Endothelial cell of umbilical vein (primary cell): ENCODE measurements at regions of chr2 and their contacts with region 1.

Region 1: GRCh38 chr2:158006961-158007719 is 94.5 kb upstream of the UPP2 start:
- DNase-seq: no peak
- H3K4me3 ChIP-seq: no peak overlapping the region
- H3K27ac ChIP-seq: no peak overlapping the region
- H3K4me1 ChIP-seq: peaks cover 10% of the 10 kb centered on the region
- H3K27me3 ChIP-seq: no peaks in the 10 kb centered on the region
- CTCF ChIP-seq: no peak
- POLR2A ChIP-seq: no peak

Region 2: GRCh38 chr2:157327621-157328500 is 679.3 kb before region 1 on chr2:
- CTCF ChIA-PET with region 1: interaction called, 3 read pairs
- POLR2A ChIA-PET with region 1: no interaction called
- dilution Hi-C with region 1: no loop called
- intact Hi-C with region 1: loop called (anchors 1 kb)
- DNase-seq: peak; percentile 65
- H3K4me3 ChIP-seq: no peak overlapping the region
- H3K27ac ChIP-seq: no peak overlapping the region
- H3K4me1 ChIP-seq: no peaks in the 10 kb centered on the region
- H3K27me3 ChIP-seq: peaks cover 0 to 4% of the 10 kb centered on the region in 2 experiments
- CTCF ChIP-seq: peak; percentile 89 to 94
- POLR2A ChIP-seq: no peak

Region 3: GRCh38 chr2:157497638-157498314 is 509.4 kb before region 1 on chr2:
- CTCF ChIA-PET with region 1: interaction called, 22 read pairs
- POLR2A ChIA-PET with region 1: no interaction called
- dilution Hi-C with region 1: no loop called
- intact Hi-C with region 1: loop called (anchors 1 kb)
- DNase-seq: peak; percentile 36
- H3K4me3 ChIP-seq: no peak overlapping the region
- H3K27ac ChIP-seq: no peak overlapping the region
- H3K4me1 ChIP-seq: no peaks in the 10 kb centered on the region
- H3K27me3 ChIP-seq: peaks cover 0 to 3% of the 10 kb centered on the region in 2 experiments
- CTCF ChIP-seq: peak; percentile 53 to 63
- POLR2A ChIP-seq: no peak

Region 4: DNA sequence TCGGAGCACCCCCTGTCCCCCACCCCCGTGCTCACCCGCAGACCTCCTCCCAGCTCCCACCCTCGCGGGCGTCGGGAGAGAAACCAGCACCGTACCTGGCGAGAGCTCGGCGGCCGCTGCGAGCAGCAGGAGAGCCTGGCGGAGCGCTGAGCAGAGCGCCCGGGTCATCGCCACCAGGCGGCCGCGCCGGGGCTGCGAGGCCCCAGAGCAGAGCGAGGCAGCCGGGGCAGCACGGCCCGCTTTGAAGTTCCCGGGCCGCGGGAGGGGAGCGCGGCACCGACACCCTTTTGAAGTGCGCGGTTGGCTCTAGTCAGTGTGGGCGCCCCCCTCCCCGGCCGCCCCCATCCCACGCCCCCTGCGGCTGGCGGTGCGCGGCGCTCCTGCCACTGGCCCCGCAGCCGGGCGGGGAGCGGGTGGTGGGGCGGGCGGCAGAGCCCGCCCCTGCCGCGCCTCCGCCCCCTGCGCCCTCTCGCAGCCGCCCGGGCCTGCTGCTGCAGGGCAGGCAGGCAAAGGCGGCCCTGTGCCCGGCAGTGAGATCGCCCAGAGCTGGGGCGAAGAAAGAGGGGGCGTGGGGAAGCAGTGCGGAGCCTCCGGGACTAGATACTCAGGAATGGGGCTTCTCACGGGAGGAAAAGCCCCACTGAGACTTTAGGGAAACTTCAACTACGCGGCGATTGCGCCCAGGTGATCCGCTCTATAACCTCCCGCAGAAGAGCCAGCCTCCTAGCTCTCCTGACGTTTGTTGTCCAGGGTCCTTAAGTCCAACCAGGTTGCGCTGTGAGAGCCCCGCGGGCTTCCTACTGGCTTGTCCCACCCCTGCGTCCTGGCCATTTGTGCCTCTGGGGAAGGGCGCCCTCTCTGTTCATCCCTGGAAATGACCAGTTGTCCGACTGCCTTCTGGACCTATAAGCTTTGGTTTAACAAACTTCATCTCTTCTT is 378.4 kb before region 1 on chr2 and contains the start of gene ACVR1C:
- CTCF ChIA-PET with region 1: no interaction called
- POLR2A ChIA-PET with region 1: no interaction called
- dilution Hi-C with region 1: no loop called
- intact Hi-C with region 1: loop called (anchors 5 kb)
- DNase-seq: peak; percentile 58
- H3K4me3 ChIP-seq: peak within 1 kb of the TSS; percentile 1 to 36 (median 20)
- H3K27ac ChIP-seq: no peak within 1 kb of the TSS
- H3K4me1 ChIP-seq: peaks cover 8% of the 10 kb centered on the region
- H3K27me3 ChIP-seq: peaks cover 20 to 30% of the 10 kb centered on the region in 2 experiments
- CTCF ChIP-seq: peak; percentile 59 to 68
- POLR2A ChIP-seq: no peak
- total RNA-seq, gene ACVR1C: not detected in 2 replicates

Region 5: GRCh38 chr2:157838442-157839161 is 168.5 kb before region 1 on chr2:
- CTCF ChIA-PET with region 1: no interaction called
- POLR2A ChIA-PET with region 1: no interaction called
- dilution Hi-C with region 1: no loop called
- intact Hi-C with region 1: loop called (anchors 1 kb)
- DNase-seq: peak; percentile 91
- H3K4me3 ChIP-seq: peak overlapping the region in 1 of 3 experiments; percentile 73
- H3K27ac ChIP-seq: peak overlapping the region; percentile 99
- H3K4me1 ChIP-seq: peaks cover 37% of the 10 kb centered on the region
- H3K27me3 ChIP-seq: no peaks in the 10 kb centered on the region
- CTCF ChIP-seq: no peak
- POLR2A ChIP-seq: peak; percentile 1

Region 6: GRCh38 chr2:158024288-158024898 is 17.3 kb after region 1 on chr2:
- CTCF ChIA-PET with region 1: interaction called, 48 read pairs
- POLR2A ChIA-PET with region 1: no interaction called
- dilution Hi-C with region 1: no loop called
- intact Hi-C with region 1: no loop called
- DNase-seq: peak; percentile 61
- H3K4me3 ChIP-seq: no peak overlapping the region
- H3K27ac ChIP-seq: no peak overlapping the region
- H3K4me1 ChIP-seq: no peaks in the 10 kb centered on the region
- H3K27me3 ChIP-seq: peaks cover 6 to 11% of the 10 kb centered on the region in 2 experiments
- CTCF ChIP-seq: peak; percentile 70 to 84
- POLR2A ChIP-seq: no peak

Region 7: GRCh38 chr2:158255257-158255656 is 248.1 kb after region 1 on chr2:
- CTCF ChIA-PET with region 1: no interaction called
- POLR2A ChIA-PET with region 1: no interaction called
- dilution Hi-C with region 1: no loop called
- intact Hi-C with region 1: no loop called
- DNase-seq: no peak
- H3K4me3 ChIP-seq: no peak overlapping the region
- H3K27ac ChIP-seq: no peak overlapping the region
- H3K4me1 ChIP-seq: no peaks in the 10 kb centered on the region
- H3K27me3 ChIP-seq: peaks cover 5 to 25% of the 10 kb centered on the region in 2 experiments
- CTCF ChIP-seq: no peak
- POLR2A ChIP-seq: no peak